IMR-90 (cell line): ENCODE measurements at regions of chr7 and their contacts with region 1.

Region 1: DNA sequence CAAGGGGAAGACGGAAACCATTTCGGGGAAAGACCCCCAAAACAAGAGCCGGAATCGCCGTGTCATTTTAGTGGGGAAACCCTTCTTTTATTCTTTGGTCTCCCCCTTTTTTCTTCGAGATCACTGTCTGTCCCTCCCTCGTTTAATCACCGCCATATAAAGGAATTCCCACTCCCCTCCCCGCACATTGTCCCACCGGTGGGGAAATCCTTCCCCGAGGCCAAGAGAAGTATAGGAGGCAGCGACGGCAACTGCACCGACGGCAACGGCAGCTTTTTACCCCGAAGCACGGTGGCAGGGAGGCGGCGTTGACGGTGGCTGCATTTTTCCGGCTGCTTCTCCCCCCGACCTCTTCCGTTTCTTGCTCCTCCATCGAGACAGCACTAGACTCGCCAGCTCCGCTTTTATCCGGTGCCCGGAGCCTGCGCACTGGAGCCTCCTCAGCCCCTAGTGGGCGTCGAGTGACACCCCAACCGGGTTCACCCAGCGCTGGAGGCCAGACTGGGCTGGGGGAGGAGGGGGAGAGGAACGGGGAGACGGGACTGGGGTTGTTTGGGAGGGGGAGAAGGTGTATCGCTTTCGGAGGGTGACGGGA is 687 bp upstream of the KMT2E start:
- DNase-seq: peak; percentile 93
- ATAC-seq: peak; percentile 70
- H3K4me3 ChIP-seq: peak overlapping the region; percentile 92
- H3K27ac ChIP-seq: peak overlapping the region; percentile 91
- H3K4me1 ChIP-seq: peaks cover 1% of the 10 kb centered on the region; the same call in 1 of the 2 replicates
- H3K27me3 ChIP-seq: no peaks in the 10 kb centered on the region
- CTCF ChIP-seq: peak; percentile 57
- POLR2A ChIP-seq: peak; percentile 97
- RAD21 ChIP-seq: peak; percentile 3; the same call in 1 of the 2 replicates

Region 2: DNA sequence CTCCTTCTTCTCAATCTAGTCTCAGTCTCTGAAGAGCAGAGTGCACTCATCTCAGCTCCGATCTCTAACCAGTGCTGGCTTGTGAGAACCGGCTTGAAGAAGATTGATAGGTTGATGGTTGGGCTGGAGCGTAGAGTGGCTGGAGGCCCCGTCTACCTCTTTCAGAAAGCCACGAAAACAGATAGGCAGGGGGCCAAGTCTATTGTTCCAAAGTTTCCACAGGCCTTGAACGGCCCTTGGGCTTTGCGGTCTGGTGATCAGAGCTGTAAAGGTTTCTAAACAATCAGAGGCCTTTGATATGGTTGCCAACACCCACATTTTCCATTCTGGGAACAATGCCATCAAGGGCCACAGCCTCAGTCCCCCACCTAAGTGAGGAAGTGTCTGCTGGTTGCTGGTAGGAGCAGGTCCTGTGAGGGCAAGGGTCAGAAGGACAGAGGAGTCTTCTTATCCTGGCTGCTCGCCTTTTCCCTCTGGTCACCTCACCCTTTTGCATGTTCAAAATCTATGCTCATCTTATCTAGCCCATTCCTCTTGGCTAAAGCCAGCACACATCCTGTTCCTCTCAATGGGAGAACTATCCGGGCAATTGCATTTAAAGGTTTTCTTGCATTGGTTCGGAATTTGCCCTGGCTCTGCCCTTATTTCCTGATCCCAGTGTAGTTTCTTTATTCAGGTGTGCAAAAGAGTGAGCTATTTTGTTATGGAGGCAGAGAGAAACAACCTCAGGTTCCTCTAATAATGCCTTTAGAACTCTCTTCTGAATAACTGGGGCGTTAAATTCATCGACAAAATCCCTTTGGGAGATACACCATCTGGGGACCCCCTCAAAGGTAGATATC is 69.6 kb before region 1 on chr7:
- CTCF ChIA-PET with region 1: no interaction called
- POLR2A ChIA-PET with region 1: no interaction called
- dilution Hi-C with region 1: no loop called
- in situ Hi-C with region 1: no loop called
- intact Hi-C with region 1: loop called (anchors 2 kb)
- DNase-seq: no peak
- ATAC-seq: no peak
- H3K4me3 ChIP-seq: no peak overlapping the region
- H3K27ac ChIP-seq: no peak overlapping the region
- H3K4me1 ChIP-seq: peaks cover 6% of the 10 kb centered on the region
- H3K27me3 ChIP-seq: no peaks in the 10 kb centered on the region
- CTCF ChIP-seq: no peak
- POLR2A ChIP-seq: no peak
- RAD21 ChIP-seq: no peak

Region 3: GRCh38 chr7:104983578-104984539 is 29.5 kb before region 1 on chr7:
- CTCF ChIA-PET with region 1: interaction called, 6 read pairs
- POLR2A ChIA-PET with region 1: interaction called, 6 read pairs
- dilution Hi-C with region 1: no loop called
- in situ Hi-C with region 1: no loop called
- intact Hi-C with region 1: loop called (anchors 1 kb)
- DNase-seq: peak; percentile 81
- ATAC-seq: peak; percentile 92
- H3K4me3 ChIP-seq: peak overlapping the region; percentile 74
- H3K27ac ChIP-seq: peak overlapping the region; percentile 97
- H3K4me1 ChIP-seq: peaks cover 16% of the 10 kb centered on the region
- H3K27me3 ChIP-seq: no peaks in the 10 kb centered on the region
- CTCF ChIP-seq: peak; percentile 49
- POLR2A ChIP-seq: peak; percentile 93
- RAD21 ChIP-seq: peak; percentile 20; the same call in 1 of the 2 replicates

Region 4: GRCh38 chr7:105024743-105025142 is 11.4 kb after region 1 on chr7:
- CTCF ChIA-PET with region 1: interaction called, 3 read pairs
- POLR2A ChIA-PET with region 1: interaction called, 10 read pairs
- dilution Hi-C with region 1: no loop called
- in situ Hi-C with region 1: no loop called
- intact Hi-C with region 1: no loop called
- DNase-seq: peak; percentile 83
- ATAC-seq: peak; percentile 94
- H3K4me3 ChIP-seq: no peak overlapping the region
- H3K27ac ChIP-seq: no peak overlapping the region
- H3K4me1 ChIP-seq: peaks cover 11% of the 10 kb centered on the region
- H3K27me3 ChIP-seq: no peaks in the 10 kb centered on the region
- CTCF ChIP-seq: no peak
- POLR2A ChIP-seq: no peak; the same call in 1 of the 2 replicates
- RAD21 ChIP-seq: no peak

Region 5: GRCh38 chr7:105055621-105056020 is 42.3 kb after region 1 on chr7:
- CTCF ChIA-PET with region 1: no interaction called
- POLR2A ChIA-PET with region 1: no interaction called
- dilution Hi-C with region 1: no loop called
- in situ Hi-C with region 1: no loop called
- intact Hi-C with region 1: loop called (anchors 5 kb)
- DNase-seq: no peak
- ATAC-seq: no peak
- H3K4me3 ChIP-seq: no peak overlapping the region
- H3K27ac ChIP-seq: no peak overlapping the region
- H3K4me1 ChIP-seq: peaks cover 3% of the 10 kb centered on the region; the same call in 1 of the 2 replicates
- H3K27me3 ChIP-seq: no peaks in the 10 kb centered on the region
- CTCF ChIP-seq: no peak
- POLR2A ChIP-seq: no peak
- RAD21 ChIP-seq: no peak

Region 6: DNA sequence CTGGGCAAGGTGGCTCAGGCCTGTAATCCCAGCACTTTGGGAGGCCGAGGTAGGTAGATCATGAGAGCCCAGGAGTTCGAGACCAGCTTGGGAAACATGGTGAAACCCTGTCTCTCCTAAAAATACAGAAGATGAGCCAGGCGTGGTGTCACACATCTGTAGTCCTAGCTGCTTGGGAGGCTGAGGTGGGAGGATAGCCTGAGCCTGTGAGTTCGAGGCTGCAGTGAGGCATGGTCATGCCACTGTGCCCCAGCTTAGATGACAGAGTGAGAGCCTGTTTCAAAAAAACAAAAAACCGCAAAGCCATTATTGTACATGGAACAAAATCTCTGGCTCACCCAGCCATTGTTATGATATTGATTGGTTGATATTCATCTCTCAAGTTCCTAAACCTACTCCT is 54.4 kb after region 1 on chr7:
- CTCF ChIA-PET with region 1: no interaction called
- POLR2A ChIA-PET with region 1: interaction called, 18 read pairs
- dilution Hi-C with region 1: no loop called
- in situ Hi-C with region 1: no loop called
- intact Hi-C with region 1: loop called (anchors 2 kb)
- DNase-seq: no peak
- ATAC-seq: no peak
- H3K4me3 ChIP-seq: no peak overlapping the region
- H3K27ac ChIP-seq: no peak overlapping the region
- H3K4me1 ChIP-seq: no peaks in the 10 kb centered on the region
- H3K27me3 ChIP-seq: no peaks in the 10 kb centered on the region
- CTCF ChIP-seq: no peak
- POLR2A ChIP-seq: no peak
- RAD21 ChIP-seq: no peak

Region 7: DNA sequence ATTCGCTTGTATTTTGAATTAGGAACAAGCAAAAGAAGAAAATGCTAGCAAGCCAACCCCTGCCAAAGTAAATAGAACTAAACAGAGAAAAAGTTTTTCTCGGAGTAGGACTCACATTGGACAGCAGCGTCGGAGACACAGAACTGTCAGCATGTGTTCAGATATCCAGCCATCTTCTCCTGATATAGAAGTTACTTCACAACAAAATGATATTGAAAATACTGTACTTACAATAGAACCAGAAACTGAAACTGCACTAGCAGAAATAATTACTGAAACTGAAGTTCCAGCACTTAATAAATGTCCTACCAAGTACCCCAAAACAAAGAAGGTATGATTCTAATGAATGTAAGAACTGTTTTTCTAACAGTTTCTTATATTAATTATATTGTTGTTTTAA is 88.5 kb after region 1 on chr7:
- CTCF ChIA-PET with region 1: no interaction called
- POLR2A ChIA-PET with region 1: no interaction called
- dilution Hi-C with region 1: no loop called
- in situ Hi-C with region 1: no loop called
- intact Hi-C with region 1: no loop called
- DNase-seq: no peak
- ATAC-seq: no peak
- H3K4me3 ChIP-seq: no peak overlapping the region
- H3K27ac ChIP-seq: no peak overlapping the region
- H3K4me1 ChIP-seq: peaks cover 8% of the 10 kb centered on the region
- H3K27me3 ChIP-seq: no peaks in the 10 kb centered on the region
- CTCF ChIP-seq: no peak
- POLR2A ChIP-seq: no peak
- RAD21 ChIP-seq: no peak